Gastrocnemius medialis (tissue), 4 donors: ENCODE measurements at regions of chr1 and their contacts with region 1.

Region 1: DNA sequence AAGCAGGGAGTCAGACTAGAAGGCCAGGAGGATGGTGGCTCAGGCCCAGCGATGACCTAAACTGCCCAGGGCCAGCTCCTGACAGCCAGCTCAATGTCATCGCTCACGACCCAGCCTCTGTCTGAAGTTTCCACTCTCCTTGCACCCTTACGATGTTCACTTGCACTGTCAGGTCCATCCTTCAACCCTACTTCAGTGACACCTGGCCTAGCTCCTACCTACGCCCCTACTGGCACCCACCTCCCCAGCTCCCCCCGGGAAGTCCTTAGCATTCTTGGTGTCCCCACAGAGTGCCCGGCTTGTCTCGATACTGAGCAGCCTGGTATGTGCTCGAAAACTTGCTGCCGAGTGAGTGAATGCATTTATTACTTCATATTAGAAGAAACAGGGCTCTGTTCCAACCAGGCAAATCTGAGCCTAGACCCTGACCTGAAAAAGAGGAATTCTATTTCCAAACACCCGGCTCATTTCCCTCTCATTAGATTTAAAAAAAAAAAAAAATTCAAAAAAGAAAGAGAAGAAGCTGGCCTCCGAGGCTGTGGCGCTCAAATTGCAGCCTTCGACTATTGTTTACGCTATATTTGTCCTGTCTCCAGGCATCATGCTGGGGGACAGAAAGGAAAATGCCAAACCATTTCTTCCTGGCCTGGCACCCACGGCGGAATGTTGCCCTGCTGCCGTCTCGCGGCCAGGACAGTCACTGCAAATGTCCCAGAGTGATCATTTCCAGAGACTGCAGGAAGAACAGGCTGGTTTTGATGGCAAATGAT is 29.8 kb upstream of the LRRC38 start:
- DNase-seq: peak; percentile 60 to 88
- ATAC-seq: peak; percentile 82 to 84
- H3K4me3 ChIP-seq: peak overlapping the region; percentile 22 to 32 (median 30)
- H3K27ac ChIP-seq: peak overlapping the region; percentile 85 to 95 (median 93)
- H3K4me1 ChIP-seq: peaks cover 24 to 42% of the 10 kb centered on the region in 2 donors
- H3K27me3 ChIP-seq: no peaks in the 10 kb centered on the region
- CTCF ChIP-seq: peak; percentile 68 to 86 (median 77)
- POLR2A ChIP-seq: no peak

Region 2: DNA sequence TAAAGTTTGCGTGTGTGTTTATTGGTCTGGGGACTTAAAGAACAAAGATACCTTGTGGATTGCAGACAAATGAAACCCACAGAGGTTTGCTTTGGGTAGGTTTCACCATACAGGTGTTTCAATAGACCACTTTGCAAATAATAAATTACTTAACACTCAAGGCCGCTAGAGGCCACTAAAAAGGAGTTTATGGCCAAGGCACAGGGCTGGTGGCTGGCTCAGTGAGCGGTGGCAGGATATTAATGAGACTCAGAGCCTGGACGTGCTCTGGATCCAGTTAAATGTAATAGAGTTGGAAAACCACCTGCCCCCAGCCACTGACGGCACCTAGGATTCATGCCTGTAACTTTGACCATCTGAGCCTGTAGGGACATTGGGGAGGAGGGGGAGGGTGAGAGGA is 74.3 kb before region 1 on chr1:
- in situ Hi-C with region 1: loop called in 1 of 4 experiments (anchors 10 kb)
- intact Hi-C with region 1: loop called (anchors 1 kb)
- DNase-seq: peak in 1 of 2 donors; percentile 66
- ATAC-seq: peak; percentile 82 to 88
- H3K4me3 ChIP-seq: no peak overlapping the region
- H3K27ac ChIP-seq: peak overlapping the region; percentile 2 to 70 (median 60)
- H3K4me1 ChIP-seq: peaks cover 0 to 2% of the 10 kb centered on the region in 2 donors
- H3K27me3 ChIP-seq: no peaks in the 10 kb centered on the region
- CTCF ChIP-seq: peak; percentile 36 to 54 (median 43)
- POLR2A ChIP-seq: no peak

Region 3: DNA sequence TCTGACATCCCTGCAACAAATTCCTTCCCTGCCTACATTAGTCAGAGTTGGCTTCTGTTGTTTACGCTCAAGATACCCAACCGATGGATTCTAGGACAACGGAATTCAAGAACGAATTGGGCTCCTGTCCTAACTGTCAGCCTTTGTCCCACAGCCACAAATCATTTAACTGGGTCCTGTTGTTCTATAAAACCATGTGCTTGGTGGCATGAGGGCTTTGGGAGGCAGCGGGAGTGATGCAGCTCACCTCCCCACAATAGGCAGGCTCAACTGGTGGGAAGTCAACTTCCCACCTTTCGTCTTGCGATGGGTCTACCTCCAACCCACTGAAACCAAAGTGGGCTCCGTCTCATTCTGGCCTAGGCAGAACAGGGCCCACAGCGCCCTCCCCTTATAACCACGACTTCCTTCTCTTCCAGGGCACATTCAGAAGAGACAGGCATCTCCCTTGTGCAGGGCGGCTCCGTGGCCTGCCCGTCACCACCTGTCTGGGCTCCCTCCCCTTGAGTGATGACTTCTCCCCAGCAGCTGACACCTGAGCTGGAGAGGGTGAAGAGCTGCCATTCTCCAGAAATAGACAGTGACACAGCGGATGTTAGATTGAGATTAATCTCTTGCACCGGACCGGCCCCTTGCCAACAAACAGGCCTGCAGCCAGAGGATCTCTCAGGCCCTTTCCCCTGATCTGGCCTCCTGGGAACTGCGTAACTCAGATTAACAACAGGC is 56.3 kb before region 1 on chr1:
- in situ Hi-C with region 1: no loop called
- intact Hi-C with region 1: loop called (anchors 5 kb)
- DNase-seq: peak; percentile 93 to 97
- ATAC-seq: peak; percentile 89 to 92
- H3K4me3 ChIP-seq: no peak overlapping the region
- H3K27ac ChIP-seq: peak overlapping the region; percentile 86 to 97 (median 94)
- H3K4me1 ChIP-seq: peaks cover 35 to 45% of the 10 kb centered on the region in 2 donors
- H3K27me3 ChIP-seq: no peaks in the 10 kb centered on the region
- CTCF ChIP-seq: no peak
- POLR2A ChIP-seq: peak; percentile 62 to 65

Region 4: GRCh38 chr1:13505020-13505419 is 38.6 kb before region 1 on chr1:
- in situ Hi-C with region 1: no loop called
- intact Hi-C with region 1: loop called (anchors 2 kb)
- DNase-seq: peak in 1 of 2 donors; percentile 53
- ATAC-seq: no peak
- H3K4me3 ChIP-seq: no peak overlapping the region
- H3K27ac ChIP-seq: peak overlapping the region; percentile 90 to 97 (median 94)
- H3K4me1 ChIP-seq: peaks cover 45 to 50% of the 10 kb centered on the region in 2 donors
- H3K27me3 ChIP-seq: no peaks in the 10 kb centered on the region
- CTCF ChIP-seq: no peak
- POLR2A ChIP-seq: no peak

Region 5: GRCh38 chr1:13517193-13517812 is 26.3 kb before region 1 on chr1:
- in situ Hi-C with region 1: no loop called
- intact Hi-C with region 1: loop called (anchors 1 kb)
- DNase-seq: peak in 1 of 2 donors; percentile 49
- ATAC-seq: no peak
- H3K4me3 ChIP-seq: no peak overlapping the region
- H3K27ac ChIP-seq: peak overlapping the region in 1 of 4 donors; percentile 95
- H3K4me1 ChIP-seq: peaks cover 5% of the 10 kb centered on the region in 2 donors
- H3K27me3 ChIP-seq: no peaks in the 10 kb centered on the region
- CTCF ChIP-seq: peak in 4 of 5 experiments; percentile 31 to 55 (median 40)
- POLR2A ChIP-seq: no peak

Region 6: DNA sequence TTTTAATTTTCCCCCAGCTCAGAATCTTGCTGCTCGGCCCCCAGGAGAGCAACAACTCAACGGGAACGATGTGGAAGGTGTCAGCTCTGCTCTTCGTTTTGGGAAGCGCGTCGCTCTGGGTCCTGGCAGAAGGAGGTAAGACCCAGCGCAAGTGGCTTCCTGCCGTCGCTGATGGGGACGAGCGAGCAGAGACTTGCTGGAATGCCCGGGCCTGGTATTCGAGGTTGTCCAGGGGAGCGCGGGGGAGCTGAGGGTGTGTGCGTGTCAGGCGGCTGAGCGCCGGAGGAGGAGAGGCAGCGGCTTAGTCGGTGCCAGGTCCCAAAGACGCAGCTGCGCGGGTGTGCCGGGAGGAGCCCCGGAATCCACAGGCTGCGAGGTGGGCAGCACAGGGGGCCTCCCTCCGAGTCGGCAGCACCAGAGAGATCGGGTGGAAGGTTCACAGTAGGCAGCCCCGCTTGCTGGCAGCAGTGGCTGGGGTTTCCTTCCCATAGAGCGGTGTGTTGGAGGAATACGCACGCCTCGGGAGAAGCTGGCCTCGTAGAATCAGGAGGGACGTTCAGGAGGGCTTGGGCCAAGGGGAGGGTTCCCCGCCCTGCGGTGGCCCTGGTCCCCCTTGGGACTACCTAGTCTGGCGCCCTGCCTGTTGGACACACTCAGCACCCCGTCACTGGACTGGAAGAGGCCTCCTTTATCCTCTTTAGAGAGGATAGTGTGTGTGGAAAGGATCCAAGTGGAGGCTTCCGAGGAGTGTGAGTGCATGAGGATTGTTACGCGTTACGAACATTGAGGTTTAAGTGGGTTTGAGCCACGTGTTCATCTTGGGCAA is 40.5 kb after region 1 on chr1:
- in situ Hi-C with region 1: no loop called
- intact Hi-C with region 1: no loop called
- DNase-seq: peak; percentile 29 to 67
- ATAC-seq: peak; percentile 73 to 79
- H3K4me3 ChIP-seq: peak overlapping the region; percentile 74 to 87 (median 80)
- H3K27ac ChIP-seq: peak overlapping the region; percentile 85 to 96 (median 92)
- H3K4me1 ChIP-seq: peaks cover 0 to 15% of the 10 kb centered on the region in 2 donors
- H3K27me3 ChIP-seq: no peaks in the 10 kb centered on the region
- CTCF ChIP-seq: no peak
- POLR2A ChIP-seq: peak; percentile 24 to 46